ENCODE measurements at regions of chr18 and their contacts with region 1.

Region 1: DNA sequence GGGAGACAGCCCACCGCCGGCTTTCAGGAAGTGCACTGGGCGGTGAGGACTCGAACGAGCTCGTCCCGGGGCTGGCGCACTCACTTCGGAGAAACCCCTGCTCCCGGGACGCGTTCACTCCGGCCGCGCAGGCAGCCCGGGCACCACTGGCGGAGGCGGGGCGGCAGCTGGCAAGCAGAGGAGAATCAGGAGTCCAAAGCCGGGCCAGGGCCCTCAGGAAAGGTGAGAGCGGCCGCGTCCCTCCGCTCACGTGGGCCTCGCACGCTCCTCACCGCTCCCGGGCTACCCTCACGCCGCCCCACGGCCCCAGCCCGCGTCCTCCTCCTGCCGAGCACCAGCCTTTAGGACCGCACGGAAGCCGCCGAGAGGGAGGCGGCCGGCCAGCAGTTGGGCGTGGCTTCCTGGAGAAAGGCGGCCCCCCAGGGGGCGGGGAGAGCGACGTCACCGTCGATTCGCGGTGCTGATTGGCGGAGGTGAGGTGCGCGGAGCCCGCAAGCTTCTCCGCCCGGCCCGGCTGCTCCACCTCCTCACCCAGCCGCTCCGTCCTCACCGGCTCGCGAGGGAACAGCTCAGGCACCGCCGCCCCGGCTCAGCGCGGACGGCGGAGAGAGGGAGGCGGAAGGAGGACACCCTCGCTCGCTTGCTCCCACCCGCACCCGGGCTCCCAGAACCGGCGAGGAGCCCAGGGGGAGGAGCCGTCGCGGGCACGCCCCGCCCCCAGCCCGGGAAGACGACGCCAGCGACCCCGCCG is at the start of gene ZCCHC2:
- DNase-seq: peak; percentile 97 to 99 (median 98)
- H3K4me3 ChIP-seq: peak within 1 kb of the TSS; percentile 74 to 97 (median 78)
- H3K27ac ChIP-seq: peak within 1 kb of the TSS; percentile 95 to 100 (median 95)
- H3K4me1 ChIP-seq: peaks cover 8 to 27% of the 10 kb centered on the region in 2 donors
- H3K27me3 ChIP-seq: no peaks in the 10 kb centered on the region
- CTCF ChIP-seq: no peak
- POLR2A ChIP-seq: peak; percentile 49 to 89
- total RNA-seq, gene ZCCHC2: 13.6 to 53.3 (median 19.2) TPM

Region 2: DNA sequence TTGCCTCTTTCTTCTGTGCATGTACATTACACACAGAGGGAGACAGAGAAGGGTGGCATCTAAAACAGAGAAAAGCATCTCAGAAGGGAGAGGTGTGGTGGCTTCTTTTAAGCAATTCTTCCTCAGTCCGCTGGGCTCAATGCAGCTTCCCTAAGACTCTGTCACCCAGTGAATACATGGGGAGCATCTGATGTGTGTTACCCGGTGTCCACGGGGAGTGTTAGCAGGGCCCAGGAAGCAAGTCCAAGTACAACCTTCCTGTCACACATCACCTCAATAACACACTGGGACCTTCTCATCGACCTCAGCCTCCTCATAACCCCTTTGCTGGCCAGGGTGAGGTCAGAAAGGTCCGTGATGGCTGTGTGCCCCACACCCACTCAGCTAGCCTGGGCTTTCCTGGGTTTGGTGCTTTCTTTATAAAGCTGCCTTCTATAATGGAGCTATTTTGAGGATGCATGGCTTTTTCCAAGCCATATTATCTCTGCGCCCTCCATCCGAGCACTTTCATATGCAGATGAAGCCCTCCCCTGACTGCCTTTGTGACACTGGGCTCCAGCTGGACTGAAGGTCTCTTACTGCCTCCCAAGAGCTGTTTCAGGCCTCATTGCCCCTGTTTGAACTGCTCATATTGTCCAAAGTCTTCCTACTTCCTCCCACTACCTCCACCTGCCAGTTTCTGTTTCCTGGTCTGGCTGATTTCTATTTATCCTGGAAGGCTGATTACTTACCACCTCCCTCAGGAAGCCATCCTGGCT is 176.2 kb before region 1 on chr18:
- intact Hi-C with region 1: no loop called
- DNase-seq: no peak
- H3K4me3 ChIP-seq: no peak overlapping the region
- H3K27ac ChIP-seq: no peak overlapping the region
- H3K4me1 ChIP-seq: no peaks in the 10 kb centered on the region
- H3K27me3 ChIP-seq: no peaks in the 10 kb centered on the region
- CTCF ChIP-seq: no peak
- POLR2A ChIP-seq: no peak

Region 3: GRCh38 chr18:62425465-62426195 is 97.0 kb before region 1 on chr18:
- intact Hi-C with region 1: loop called in 1 of 2 experiments (anchors 5 kb)
- DNase-seq: peak; percentile 88 to 95 (median 91)
- H3K4me3 ChIP-seq: peak overlapping the region in 2 of 4 donors; percentile 32 to 43
- H3K27ac ChIP-seq: peak overlapping the region; percentile 5 to 79 (median 73)
- H3K4me1 ChIP-seq: peaks cover 0 to 10% of the 10 kb centered on the region in 2 donors
- H3K27me3 ChIP-seq: no peaks in the 10 kb centered on the region
- CTCF ChIP-seq: peak; percentile 74 to 97 (median 90)
- POLR2A ChIP-seq: no peak

Region 4: GRCh38 chr18:62460851-62461300 is 61.8 kb before region 1 on chr18:
- intact Hi-C with region 1: no loop called
- DNase-seq: peak; percentile 58 to 88 (median 76)
- H3K4me3 ChIP-seq: no peak overlapping the region
- H3K27ac ChIP-seq: peak overlapping the region in 4 of 5 donors; percentile 17 to 74 (median 65)
- H3K4me1 ChIP-seq: peaks cover 10 to 19% of the 10 kb centered on the region in 2 donors
- H3K27me3 ChIP-seq: no peaks in the 10 kb centered on the region
- CTCF ChIP-seq: no peak
- POLR2A ChIP-seq: no peak